ENCODE measurements at regions of chr2 and their contacts with region 1.

Region 1: GRCh38 chr2:137964066-137964858 is at the start of gene HNMT:
- DNase-seq: peak in 1 of 2 donors; percentile 71
- H3K4me3 ChIP-seq: peak within 1 kb of the TSS; percentile 45 to 75
- H3K27ac ChIP-seq: peak within 1 kb of the TSS; percentile 90 to 93
- H3K4me1 ChIP-seq: peaks cover 0 to 18% of the 10 kb centered on the region in 2 donors
- H3K27me3 ChIP-seq: no peaks in the 10 kb centered on the region
- CTCF ChIP-seq: no peak
- total RNA-seq, gene HNMT: 22.2 TPM

Region 2: GRCh38 chr2:138501425-138502283 is 537.4 kb after region 1 on chr2 and contains the start of gene SPOPL:
- intact Hi-C with region 1: loop called (anchors 5 kb)
- DNase-seq: peak; percentile 72 to 96
- H3K4me3 ChIP-seq: peak within 1 kb of the TSS; percentile 68 to 90
- H3K27ac ChIP-seq: peak within 1 kb of the TSS; percentile 94 to 96
- H3K4me1 ChIP-seq: peaks cover 0 to 16% of the 10 kb centered on the region in 2 donors
- H3K27me3 ChIP-seq: no peaks in the 10 kb centered on the region
- CTCF ChIP-seq: peak in 2 of 3 experiments; percentile 18 to 26
- total RNA-seq, gene SPOPL: 9.0 TPM

Measured in ascending aorta (tissue), 2 donors.